ENCODE measurements at regions of chr7 and their contacts with region 1.

Region 1: GRCh38 chr7:131071786-131072504 is 255.7 kb upstream of the MKLN1 start:
- DNase-seq: no peak
- CTCF ChIP-seq: peak; percentile 29

Region 2: DNA sequence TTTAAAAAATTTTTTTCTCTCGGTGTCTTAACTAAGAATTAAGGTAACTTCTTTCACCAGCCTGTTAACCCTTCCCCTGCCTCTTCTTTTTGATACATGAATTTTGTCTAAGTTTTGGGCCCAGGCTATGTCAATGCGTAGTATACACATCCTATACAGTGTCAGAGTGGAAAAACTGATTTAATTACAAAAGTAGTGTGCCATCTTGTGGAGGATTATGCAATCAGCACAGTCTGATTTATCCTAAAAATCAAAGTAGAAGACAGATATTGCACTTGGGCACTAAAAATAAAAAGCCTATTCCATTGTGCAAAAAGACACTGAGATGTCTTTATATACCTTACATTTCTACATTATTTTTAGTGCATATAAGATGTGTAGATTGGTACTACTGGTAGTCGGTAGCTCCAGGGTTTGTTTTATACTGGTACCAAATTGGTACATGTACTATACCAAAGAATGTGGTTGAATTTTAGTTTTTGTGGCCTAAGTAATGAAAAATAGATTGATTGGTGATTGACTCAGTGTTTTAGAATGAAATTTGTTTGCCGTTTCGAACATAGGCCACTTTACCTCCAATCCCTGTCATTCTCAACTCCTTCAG is 352.4 kb after region 1 on chr7:
- in situ Hi-C with region 1: loop called (anchors 10 kb)
- DNase-seq: peak; percentile 24
- CTCF ChIP-seq: peak; percentile 58